CD14-positive monocyte (primary cell): ENCODE measurements at regions of chr16 and their contacts with region 1.

Region 1: GRCh38 chr16:23539984-23540816 is 16.9 kb downstream of the EARS2 start:
- DNase-seq: no peak
- H3K4me3 ChIP-seq: no peak overlapping the region
- H3K4me3 Mint-ChIP-seq: no peak overlapping the region
- H3K27ac ChIP-seq: peak overlapping the region in 1 of 2 donors; percentile 51
- H3K27ac Mint-ChIP-seq: peak overlapping the region in 3 of 7 donors; percentile 15 to 46 (median 45)
- H3K4me1 ChIP-seq: peaks cover 11 to 14% of the 10 kb centered on the region in 2 donors
- H3K4me1 Mint-ChIP-seq: peaks cover 17% of the 10 kb centered on the region
- H3K27me3 ChIP-seq: no peaks in the 10 kb centered on the region
- H3K27me3 Mint-ChIP-seq: no peaks in the 10 kb centered on the region
- CTCF ChIP-seq: no peak

Region 2: GRCh38 chr16:23496826-23497542 is 43.2 kb before region 1 on chr16:
- intact Hi-C with region 1: loop called in 1 of 2 experiments (anchors 10 kb)
- DNase-seq: peak in 2 of 3 donors; percentile 23 to 49
- H3K4me3 ChIP-seq: peak overlapping the region in 1 of 3 experiments; percentile 31
- H3K4me3 Mint-ChIP-seq: peak overlapping the region; percentile 63 to 80
- H3K27ac ChIP-seq: peak overlapping the region; percentile 60 to 69
- H3K27ac Mint-ChIP-seq: peak overlapping the region; percentile 73 to 94 (median 89)
- H3K4me1 ChIP-seq: peaks cover 41 to 42% of the 10 kb centered on the region in 2 donors
- H3K4me1 Mint-ChIP-seq: peaks cover 42% of the 10 kb centered on the region
- H3K27me3 ChIP-seq: no peaks in the 10 kb centered on the region
- H3K27me3 Mint-ChIP-seq: no peaks in the 10 kb centered on the region
- CTCF ChIP-seq: no peak